Common myeloid progenitor, CD34-positive (primary cell): ENCODE measurements at regions of chr4 and their contacts with region 1.

Region 1: DNA sequence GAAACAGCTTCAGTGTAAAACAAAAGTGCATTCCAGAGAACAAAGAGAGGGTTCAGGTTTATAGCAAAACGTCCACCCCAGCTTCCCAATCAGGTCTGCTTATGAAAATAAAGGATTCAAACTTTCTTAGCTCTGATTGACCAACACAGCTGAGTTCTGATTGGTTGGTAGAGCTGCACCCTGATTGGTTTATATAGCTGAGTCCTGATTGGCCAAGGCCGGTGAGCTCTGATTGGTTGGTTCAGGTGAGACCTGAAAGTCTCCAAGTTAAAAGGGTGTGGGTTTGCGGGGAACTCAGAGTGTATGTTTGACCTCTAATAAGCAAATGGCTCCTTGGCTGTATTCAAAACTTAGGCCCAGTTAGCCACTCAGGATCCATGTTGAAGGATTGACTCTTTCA is 20.9 kb downstream of the CLRN2 start:
- DNase-seq: no peak
- H3K4me3 ChIP-seq: no peak overlapping the region
- H3K27ac ChIP-seq: no peak overlapping the region
- H3K4me1 ChIP-seq: no peaks in the 10 kb centered on the region
- H3K27me3 ChIP-seq: no peaks in the 10 kb centered on the region

Region 2: GRCh38 chr4:17550549-17550948 is 14.6 kb after region 1 on chr4:
- CTCF ChIA-PET with region 1: interaction called, 16 read pairs
- POLR2A ChIA-PET with region 1: no interaction called
- DNase-seq: no peak
- H3K4me3 ChIP-seq: no peak overlapping the region
- H3K27ac ChIP-seq: no peak overlapping the region
- H3K4me1 ChIP-seq: no peaks in the 10 kb centered on the region
- H3K27me3 ChIP-seq: no peaks in the 10 kb centered on the region